GM13976 (cell line): ENCODE measurements at regions of chr16 and their contacts with region 1.

Region 1: DNA sequence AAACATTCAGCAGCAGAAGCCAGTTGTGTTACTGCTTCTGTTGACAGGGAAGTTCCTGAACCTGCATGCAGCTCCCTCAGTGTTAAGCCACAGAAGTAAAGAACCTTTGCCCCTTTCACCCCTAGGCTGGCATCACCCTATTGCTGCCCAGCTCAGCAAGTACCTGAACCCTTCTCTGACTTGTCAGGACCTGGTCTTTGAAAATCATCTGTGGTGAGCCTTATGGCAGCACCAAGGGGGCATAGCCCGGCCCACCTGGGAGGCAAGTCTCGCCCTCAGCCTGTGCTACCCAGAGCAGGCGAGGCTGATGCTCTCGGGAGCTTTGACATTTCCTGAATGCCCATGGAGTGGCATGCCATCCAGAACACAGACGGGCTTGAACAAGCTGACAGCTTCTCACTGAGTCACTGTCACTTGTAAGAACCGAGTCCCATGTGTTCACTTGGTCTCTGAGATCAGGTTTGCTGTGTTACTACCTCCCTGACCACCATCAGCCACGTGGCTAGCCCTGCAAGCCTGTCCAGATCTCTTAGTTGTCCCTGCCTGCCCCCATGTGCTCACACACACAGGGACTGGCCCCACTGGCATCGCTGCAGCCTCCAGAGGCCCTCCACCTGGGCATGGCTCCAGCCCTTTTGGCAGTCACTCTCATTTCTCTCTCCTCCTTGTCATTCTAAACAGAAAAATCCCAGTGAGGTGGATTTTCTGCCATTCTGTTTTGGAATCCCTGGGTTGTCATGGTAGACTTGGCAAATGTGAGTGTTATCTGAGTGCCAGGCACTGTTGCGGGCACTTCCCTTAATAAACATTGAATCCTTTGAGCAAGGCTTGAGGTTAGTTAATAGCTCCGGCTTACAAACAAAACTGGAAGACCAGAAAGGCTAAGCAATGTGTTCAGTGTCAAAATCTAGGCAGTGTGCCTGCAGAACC is 2.9 kb upstream of the CARMIL2 start:
- DNase-seq: no peak
- CTCF ChIP-seq: no peak

Region 2: DNA sequence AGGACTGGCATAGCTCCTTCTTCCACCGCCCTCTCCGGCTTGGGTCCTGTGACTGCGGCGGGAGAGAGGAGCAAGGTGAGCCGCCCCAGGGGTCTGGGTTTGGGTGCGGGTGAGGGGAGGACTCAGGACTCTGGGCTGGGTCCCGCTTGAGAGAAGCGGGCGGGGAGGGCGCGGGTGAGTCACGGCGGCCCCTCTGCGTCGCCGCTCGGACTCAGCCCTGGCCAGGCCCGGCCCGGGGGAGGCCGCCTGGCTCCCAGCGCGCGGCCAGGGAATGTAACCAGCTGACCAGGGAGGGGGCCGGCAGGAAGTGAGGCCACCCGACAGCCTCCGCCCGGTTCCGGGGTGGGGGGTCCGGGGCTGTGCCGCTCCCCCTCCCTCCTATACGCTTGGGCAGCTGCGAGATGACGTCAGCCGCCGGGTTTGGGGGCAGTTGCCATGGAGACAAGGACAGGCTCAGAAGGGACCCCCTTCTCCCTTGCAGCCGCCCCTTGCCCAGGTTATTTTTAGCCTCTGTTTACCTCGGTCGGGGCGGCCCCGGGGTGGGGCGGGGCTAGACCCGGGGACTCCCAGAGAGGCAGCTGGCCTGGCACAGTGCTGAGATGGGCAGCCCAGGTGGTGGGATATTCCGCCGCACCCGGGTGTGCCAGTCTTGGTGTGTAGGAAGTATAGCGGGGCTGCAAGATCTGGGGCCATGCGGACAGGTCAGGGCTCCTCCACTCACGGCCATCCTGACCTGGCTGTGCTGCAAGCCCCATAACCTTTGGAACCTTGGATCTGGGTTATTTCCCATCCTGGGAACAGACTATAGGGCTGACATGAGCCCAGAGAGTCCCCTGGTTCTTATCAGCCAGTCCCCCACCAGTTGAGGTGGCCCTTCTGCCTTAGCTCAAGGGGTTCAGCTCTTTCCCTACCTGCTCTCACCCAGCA is 111.8 kb before region 1 on chr16:
- in situ Hi-C with region 1: loop called (anchors 10 kb)
- DNase-seq: peak; percentile 79
- CTCF ChIP-seq: no peak

Region 3: DNA sequence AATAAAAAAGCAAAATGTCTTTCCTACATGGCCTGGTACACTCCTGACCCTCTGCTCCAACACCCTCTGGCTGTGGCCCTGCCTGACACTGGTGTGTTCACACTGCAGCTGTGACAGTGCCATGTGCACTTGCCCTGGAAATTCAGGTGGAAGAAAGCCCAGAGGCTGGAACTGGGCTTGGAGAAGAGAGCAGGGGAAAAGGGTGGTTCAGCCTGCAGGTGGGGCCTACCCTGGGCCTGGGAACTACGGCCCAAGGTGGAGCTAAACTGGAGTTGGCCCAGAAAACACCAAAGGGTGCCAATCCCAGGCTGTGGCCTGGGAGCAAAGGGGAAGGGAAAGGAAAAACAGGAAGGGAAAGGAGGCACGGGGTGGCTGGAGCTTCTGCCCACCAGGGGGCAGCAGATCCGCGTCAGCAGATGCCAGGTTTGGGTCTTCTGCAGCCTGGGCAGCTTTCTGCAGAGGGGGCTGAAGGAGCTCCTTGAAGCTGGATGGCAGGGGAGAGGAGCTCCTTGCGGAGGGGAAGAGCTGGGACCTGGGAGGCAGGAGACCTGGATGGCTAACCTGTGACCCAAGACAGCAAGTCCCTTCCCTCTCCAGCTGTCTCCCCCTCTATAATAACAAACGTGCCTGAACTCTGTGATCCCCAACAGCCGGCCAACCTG is 95.2 kb before region 1 on chr16:
- in situ Hi-C with region 1: no loop called
- DNase-seq: peak; percentile 85
- CTCF ChIP-seq: peak; percentile 90